Activated CD4-positive, alpha-beta T cell treated with anti-CD3 and anti-CD28 coated beads, Interleukin-2, amount 10 ng/mL, durations not matched to agents 24 days and 14 days (primary cell): ENCODE measurements at regions of chr9 and their contacts with region 1.

Region 1: DNA sequence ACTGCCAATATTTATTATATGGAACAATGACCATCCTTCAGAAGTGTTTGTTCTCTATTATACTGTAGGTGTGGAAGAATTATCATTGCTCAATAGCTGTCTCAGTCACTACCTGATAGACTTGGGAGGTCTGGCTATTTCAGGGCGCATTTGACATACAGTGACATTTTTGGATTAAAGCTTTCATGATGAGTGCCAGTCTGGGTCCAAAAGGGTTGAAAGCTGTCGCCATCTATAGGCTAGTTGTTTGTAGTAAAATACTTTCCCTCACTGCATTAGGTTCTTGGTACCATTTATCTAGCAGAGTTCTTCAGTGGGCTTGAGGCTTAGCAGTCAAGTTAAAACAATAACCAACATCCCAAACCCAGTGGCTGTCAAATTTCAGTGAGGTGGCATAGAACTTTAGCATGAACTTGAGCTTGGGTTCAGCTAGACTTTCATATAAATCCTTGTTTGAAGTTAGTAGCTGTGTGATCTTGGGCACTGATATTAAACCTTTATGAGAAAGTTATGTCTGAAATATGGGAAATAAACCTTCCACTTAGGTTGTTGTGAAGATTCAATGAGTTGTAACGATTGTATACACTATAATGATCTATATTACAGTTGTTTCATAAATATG is 110.5 kb upstream of the CDKN2B start:
- DNase-seq: peak; percentile 78
- H3K4me3 Mint-ChIP-seq: no peak overlapping the region
- H3K27ac Mint-ChIP-seq: no peak overlapping the region
- H3K4me1 Mint-ChIP-seq: peaks cover 13% of the 10 kb centered on the region
- H3K27me3 Mint-ChIP-seq: peaks cover 62% of the 10 kb centered on the region

Region 2: DNA sequence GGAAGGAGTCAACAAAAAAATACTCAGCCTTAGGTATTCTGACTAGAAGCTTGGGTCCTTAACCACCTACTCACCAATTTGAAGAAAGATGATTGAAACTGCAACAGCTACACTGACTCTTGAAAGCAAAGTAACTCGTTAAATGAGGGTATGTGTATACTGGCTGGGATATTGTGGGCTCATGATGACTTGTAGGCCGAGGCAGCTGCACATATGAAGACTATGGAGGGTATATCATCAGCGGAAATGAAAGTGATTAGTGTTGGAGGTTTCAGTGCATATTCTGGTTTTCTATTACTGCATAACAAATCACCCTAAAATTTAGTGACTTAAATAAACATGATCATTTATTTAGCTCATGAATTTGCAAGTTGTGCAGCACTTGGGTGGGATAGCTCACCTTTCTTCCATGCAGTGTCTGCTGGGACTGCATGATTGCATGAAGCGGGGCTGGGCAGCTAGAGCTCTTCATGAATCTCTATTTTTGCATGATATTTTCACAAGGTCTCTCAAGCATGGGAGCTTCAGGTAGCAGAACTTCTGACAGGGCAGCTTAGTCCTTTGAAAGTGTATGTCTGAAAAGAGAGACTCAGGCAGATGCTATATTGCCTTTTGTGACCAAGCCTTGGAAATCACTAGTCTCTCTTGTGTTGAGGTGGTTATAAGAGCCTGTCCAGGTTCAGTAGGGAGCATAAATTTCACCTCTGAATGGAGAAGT is 14.5 kb before region 1 on chr9:
- intact Hi-C with region 1: loop called (anchors 2 kb)
- DNase-seq: no peak
- H3K4me3 Mint-ChIP-seq: no peak overlapping the region
- H3K27ac Mint-ChIP-seq: no peak overlapping the region
- H3K4me1 Mint-ChIP-seq: peaks cover 33% of the 10 kb centered on the region
- H3K27me3 Mint-ChIP-seq: peaks cover 44% of the 10 kb centered on the region

Region 3: DNA sequence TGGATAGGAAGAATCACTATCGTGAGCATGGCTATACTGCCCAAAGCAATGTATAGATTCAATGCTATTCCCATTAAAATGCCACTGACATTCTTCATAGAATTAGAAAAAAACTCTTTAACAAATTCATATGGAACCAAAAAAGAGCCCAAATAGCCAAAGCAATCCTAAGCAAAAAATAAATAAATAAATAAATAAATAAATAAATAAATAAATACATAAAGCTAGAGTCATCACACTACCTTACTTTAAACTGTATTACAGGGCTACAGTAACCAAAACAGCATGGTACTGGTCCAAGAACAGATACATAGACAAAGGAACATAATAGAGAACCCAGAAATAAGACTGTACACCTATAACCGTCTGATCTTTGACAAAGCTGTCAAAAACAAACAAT is 69.8 kb after region 1 on chr9:
- intact Hi-C with region 1: no loop called
- DNase-seq: no peak
- H3K4me3 Mint-ChIP-seq: no peak overlapping the region
- H3K27ac Mint-ChIP-seq: no peak overlapping the region
- H3K4me1 Mint-ChIP-seq: no peaks in the 10 kb centered on the region
- H3K27me3 Mint-ChIP-seq: peaks cover 50% of the 10 kb centered on the region